ENCODE measurements at regions of chr2 and their contacts with region 1.

Region 1: GRCh38 chr2:105235388-105236054 is 6.0 kb upstream of the GPR45 start:
- DNase-seq: peak; percentile 34 to 82
- ATAC-seq: peak; percentile 79 to 90
- H3K4me3 ChIP-seq: no peak overlapping the region
- H3K27ac ChIP-seq: peak overlapping the region; percentile 0 to 2; a peak in 1 of 6 replicates
- H3K4me1 ChIP-seq: peaks cover 5% of the 10 kb centered on the region; the same call in 2 of the 3 replicates
- CTCF ChIP-seq: peak; percentile 87
- EP300 ChIP-seq: no peak
- POLR2A ChIP-seq: no peak
- RAD21 ChIP-seq: peak; percentile 72 to 73

Region 2: DNA sequence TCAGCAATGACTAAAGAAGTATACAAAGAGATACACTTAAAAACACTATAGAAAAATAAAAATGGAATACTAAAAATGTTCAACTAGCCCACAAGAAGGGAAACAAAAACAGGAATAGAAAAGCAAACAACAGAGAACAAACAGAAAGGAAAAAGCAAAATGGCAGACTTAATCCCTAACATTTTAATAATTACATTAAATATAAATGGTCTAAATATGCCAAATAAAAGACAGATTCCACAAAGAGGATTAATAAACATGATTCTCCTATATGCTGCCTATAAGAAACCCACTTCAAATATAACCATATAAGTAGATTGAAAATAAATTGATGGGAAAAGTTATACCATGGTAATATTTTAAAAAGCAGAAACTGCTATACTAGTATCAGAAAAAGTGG is 77.5 kb before region 1 on chr2:
- CTCF ChIA-PET with region 1: no interaction called
- POLR2A ChIA-PET with region 1: no interaction called
- DNase-seq: no peak
- ATAC-seq: no peak
- H3K4me3 ChIP-seq: no peak overlapping the region
- H3K27ac ChIP-seq: no peak overlapping the region
- H3K4me1 ChIP-seq: no peaks in the 10 kb centered on the region
- CTCF ChIP-seq: no peak
- EP300 ChIP-seq: no peak
- POLR2A ChIP-seq: no peak
- RAD21 ChIP-seq: no peak

Region 3: DNA sequence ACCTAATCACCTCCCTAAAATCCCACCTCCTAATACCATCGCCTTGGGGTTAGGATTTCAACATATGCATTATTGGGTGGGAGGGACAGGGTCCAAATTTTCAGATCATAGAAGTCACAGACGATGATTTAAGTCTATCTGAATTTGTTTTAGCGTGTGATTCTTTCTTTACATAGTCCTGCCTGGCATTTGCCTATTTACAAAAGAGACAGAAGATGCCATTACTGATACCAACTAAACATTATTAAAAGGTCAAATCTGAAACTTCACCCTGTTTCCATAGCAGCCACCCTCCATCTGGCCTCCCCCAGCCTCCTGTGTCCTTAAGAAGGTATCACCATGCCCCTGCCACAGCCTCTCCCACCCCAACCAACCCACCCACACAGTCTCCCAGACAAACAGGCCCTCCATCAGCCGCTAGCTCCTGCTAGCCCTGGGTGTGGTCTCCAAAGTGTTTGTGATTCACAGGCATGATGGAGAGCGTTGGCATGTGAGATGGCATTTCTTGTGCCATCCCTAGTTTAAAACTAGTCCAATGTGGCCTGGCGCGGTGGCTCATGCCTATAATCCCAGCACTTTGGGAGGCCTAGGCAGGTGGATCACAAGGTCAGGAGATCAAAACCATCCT is 39.0 kb before region 1 on chr2:
- CTCF ChIA-PET with region 1: no interaction called
- POLR2A ChIA-PET with region 1: no interaction called
- DNase-seq: no peak
- ATAC-seq: no peak
- H3K4me3 ChIP-seq: no peak overlapping the region
- H3K27ac ChIP-seq: no peak overlapping the region
- H3K4me1 ChIP-seq: no peaks in the 10 kb centered on the region
- CTCF ChIP-seq: no peak
- EP300 ChIP-seq: no peak
- POLR2A ChIP-seq: no peak
- RAD21 ChIP-seq: no peak

Region 4: GRCh38 chr2:105215586-105216192 is 19.8 kb before region 1 on chr2:
- CTCF ChIA-PET with region 1: interaction called, 12 read pairs
- POLR2A ChIA-PET with region 1: no interaction called
- DNase-seq: no peak
- ATAC-seq: no peak
- H3K4me3 ChIP-seq: no peak overlapping the region
- H3K27ac ChIP-seq: no peak overlapping the region
- H3K4me1 ChIP-seq: no peaks in the 10 kb centered on the region
- CTCF ChIP-seq: no peak
- EP300 ChIP-seq: no peak
- POLR2A ChIP-seq: no peak
- RAD21 ChIP-seq: no peak

Region 5: GRCh38 chr2:105283532-105283931 is 48.0 kb after region 1 on chr2:
- CTCF ChIA-PET with region 1: no interaction called
- POLR2A ChIA-PET with region 1: no interaction called
- DNase-seq: no peak
- ATAC-seq: no peak
- H3K4me3 ChIP-seq: no peak overlapping the region
- H3K27ac ChIP-seq: no peak overlapping the region
- H3K4me1 ChIP-seq: no peaks in the 10 kb centered on the region
- CTCF ChIP-seq: no peak
- EP300 ChIP-seq: no peak
- POLR2A ChIP-seq: no peak
- RAD21 ChIP-seq: no peak

Region 6: DNA sequence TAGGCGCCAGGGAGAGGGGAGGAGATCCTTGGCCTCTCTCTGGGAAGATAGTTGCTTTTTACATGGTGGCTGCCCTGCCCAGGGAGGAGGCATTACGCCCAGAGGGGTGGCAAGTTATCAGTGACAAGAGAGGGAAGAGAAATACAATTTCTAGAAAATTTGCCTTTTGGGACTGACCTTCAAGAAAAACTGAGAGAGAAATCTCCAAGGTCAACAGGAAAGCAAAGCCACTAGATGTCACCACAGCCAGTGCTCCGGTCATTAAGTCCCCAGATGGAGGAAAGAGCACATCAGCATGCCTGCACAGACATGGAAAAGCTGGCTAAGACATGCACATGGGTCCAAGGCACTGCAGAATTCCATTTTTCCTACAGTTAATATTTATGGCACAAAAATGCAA is 142.3 kb after region 1 on chr2:
- CTCF ChIA-PET with region 1: no interaction called
- POLR2A ChIA-PET with region 1: no interaction called
- DNase-seq: no peak
- ATAC-seq: peak in 1 of 2 experiments; percentile 14; a peak in 1 of 6 replicates
- H3K4me3 ChIP-seq: no peak overlapping the region
- H3K27ac ChIP-seq: no peak overlapping the region
- H3K4me1 ChIP-seq: peaks cover 35% of the 10 kb centered on the region
- CTCF ChIP-seq: peak; percentile 23; the same call in 2 of the 3 replicates
- EP300 ChIP-seq: no peak
- POLR2A ChIP-seq: no peak
- RAD21 ChIP-seq: peak; percentile 37 to 41; a peak in 4 of 5 replicates

Measured in A549 (cell line).